CD4-positive, alpha-beta memory T cell (primary cell): ENCODE measurements at regions of chr10 and their contacts with region 1.

Region 1: DNA sequence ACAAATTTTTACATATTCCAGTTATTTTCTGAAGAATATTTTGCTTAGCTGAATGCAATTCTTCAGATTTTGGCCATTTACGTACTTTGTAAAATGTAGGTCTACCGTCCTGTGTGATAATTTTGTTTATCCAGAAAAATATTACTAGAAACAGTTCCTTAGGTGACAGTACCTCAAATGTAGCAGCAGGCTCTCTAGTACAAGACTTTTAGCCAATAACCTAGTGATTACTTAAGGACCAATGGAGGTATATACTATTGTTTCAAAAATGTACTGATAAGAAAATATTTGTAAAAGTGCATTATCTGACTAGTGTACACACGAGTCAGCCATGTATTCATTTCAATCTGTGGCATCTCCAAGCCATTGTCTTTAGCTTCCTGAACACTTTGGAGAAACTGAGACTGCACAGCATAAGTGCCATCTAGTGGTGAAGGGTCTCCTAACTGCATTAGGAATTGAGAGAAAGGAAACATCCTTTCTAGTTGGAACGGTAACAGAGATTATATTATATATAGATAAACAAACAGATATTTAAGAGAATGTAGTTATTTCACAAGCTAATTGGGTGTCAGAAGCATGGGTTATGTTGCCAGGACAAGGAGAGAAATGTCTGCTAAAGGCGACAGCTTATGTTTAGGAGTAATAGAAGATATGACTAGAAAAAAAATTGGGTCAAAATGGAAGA is 23.7 kb downstream of the RTKN2 start:
- DNase-seq: peak; percentile 52 to 68 (median 65)
- H3K4me3 ChIP-seq: no peak overlapping the region
- H3K4me3 Mint-ChIP-seq: peak overlapping the region in 6 of 8 donors; percentile 22 to 62 (median 42)
- H3K27ac ChIP-seq: no peak overlapping the region
- H3K27ac Mint-ChIP-seq: peak overlapping the region in 4 of 7 donors; percentile 11 to 70 (median 37)
- H3K4me1 ChIP-seq: peaks cover 37% of the 10 kb centered on the region
- H3K4me1 Mint-ChIP-seq: peaks cover 22 to 35% (median 25%) of the 10 kb centered on the region in 4 donors
- H3K27me3 ChIP-seq: no peaks in the 10 kb centered on the region
- H3K27me3 Mint-ChIP-seq: peaks cover 0 to 1% of the 10 kb centered on the region in 2 donors

Region 2: GRCh38 chr10:62076891-62077290 is 168.0 kb before region 1 on chr10:
- CTCF ChIA-PET with region 1: interaction called, 21 read pairs
- POLR2A ChIA-PET with region 1: interaction called, 5 read pairs
- intact Hi-C with region 1: loop called (anchors 1 kb)
- DNase-seq: peak in 1 of 5 donors; percentile 24
- H3K4me3 ChIP-seq: no peak overlapping the region
- H3K4me3 Mint-ChIP-seq: peak overlapping the region; percentile 3 to 71 (median 30)
- H3K27ac ChIP-seq: no peak overlapping the region
- H3K27ac Mint-ChIP-seq: peak overlapping the region; percentile 11 to 94 (median 77)
- H3K4me1 ChIP-seq: peaks cover 84% of the 10 kb centered on the region
- H3K4me1 Mint-ChIP-seq: peaks cover 56 to 93% (median 72%) of the 10 kb centered on the region in 4 donors
- H3K27me3 ChIP-seq: no peaks in the 10 kb centered on the region
- H3K27me3 Mint-ChIP-seq: no peaks in the 10 kb centered on the region

Region 3: GRCh38 chr10:62082729-62083411 is 162.1 kb before region 1 on chr10:
- CTCF ChIA-PET with region 1: interaction called, 21 read pairs
- POLR2A ChIA-PET with region 1: interaction called, 7 read pairs
- intact Hi-C with region 1: loop called (anchors 1 kb)
- DNase-seq: peak; percentile 58 to 74 (median 64)
- H3K4me3 ChIP-seq: peak overlapping the region in 1 of 2 donors; percentile 3
- H3K4me3 Mint-ChIP-seq: peak overlapping the region; percentile 58 to 83 (median 73)
- H3K27ac ChIP-seq: peak overlapping the region; percentile 45
- H3K27ac Mint-ChIP-seq: peak overlapping the region; percentile 24 to 95 (median 89)
- H3K4me1 ChIP-seq: peaks cover 79% of the 10 kb centered on the region
- H3K4me1 Mint-ChIP-seq: peaks cover 44 to 77% (median 62%) of the 10 kb centered on the region in 4 donors
- H3K27me3 ChIP-seq: no peaks in the 10 kb centered on the region
- H3K27me3 Mint-ChIP-seq: no peaks in the 10 kb centered on the region

Region 4: DNA sequence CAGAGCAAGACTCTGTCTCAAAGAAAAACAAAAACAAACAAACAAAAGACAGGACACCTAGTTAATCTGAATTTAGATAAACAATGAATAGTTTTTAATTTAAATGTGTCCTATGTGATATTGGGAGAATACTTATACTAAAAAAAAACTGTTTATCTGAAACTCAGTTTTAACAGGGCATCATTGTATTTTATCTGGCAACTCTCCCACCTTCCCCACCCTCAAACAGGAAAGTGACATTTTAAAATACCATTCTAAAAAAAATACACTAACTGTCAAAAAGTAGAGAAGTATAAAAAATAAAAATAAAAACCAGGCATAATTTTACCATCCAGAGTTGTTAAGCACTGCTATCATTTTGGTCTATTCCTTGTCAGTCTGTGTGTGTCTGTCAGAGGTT is 95.3 kb before region 1 on chr10:
- CTCF ChIA-PET with region 1: interaction called, 14 read pairs
- POLR2A ChIA-PET with region 1: interaction called, 5 read pairs
- intact Hi-C with region 1: loop called (anchors 1 kb)
- DNase-seq: no peak
- H3K4me3 ChIP-seq: no peak overlapping the region
- H3K4me3 Mint-ChIP-seq: no peak overlapping the region
- H3K27ac ChIP-seq: no peak overlapping the region
- H3K27ac Mint-ChIP-seq: no peak overlapping the region
- H3K4me1 ChIP-seq: no peaks in the 10 kb centered on the region
- H3K4me1 Mint-ChIP-seq: peaks cover 3 to 7% (median 6%) of the 10 kb centered on the region in 4 donors
- H3K27me3 ChIP-seq: no peaks in the 10 kb centered on the region
- H3K27me3 Mint-ChIP-seq: no peaks in the 10 kb centered on the region

Region 5: DNA sequence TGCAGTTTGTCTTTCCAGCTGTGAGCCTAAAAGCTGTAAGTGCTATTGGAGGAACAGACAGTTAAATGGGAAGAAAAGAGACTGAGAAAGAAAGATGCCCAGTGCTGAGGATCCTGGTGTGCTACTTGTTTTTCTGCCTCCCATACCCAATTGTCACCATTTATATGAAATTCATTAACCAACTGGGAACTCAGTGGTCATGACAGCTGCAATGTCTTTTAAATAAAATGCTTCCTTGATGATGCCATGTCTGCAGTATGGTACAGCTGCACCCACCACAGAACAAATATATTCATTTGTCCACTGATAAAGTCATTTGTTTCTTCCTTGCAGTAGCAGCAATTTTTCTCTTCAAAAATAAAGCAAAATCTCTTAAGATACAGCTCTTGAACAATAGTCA is 39.3 kb after region 1 on chr10:
- CTCF ChIA-PET with region 1: no interaction called
- POLR2A ChIA-PET with region 1: no interaction called
- intact Hi-C with region 1: no loop called
- DNase-seq: no peak
- H3K4me3 ChIP-seq: no peak overlapping the region
- H3K4me3 Mint-ChIP-seq: no peak overlapping the region
- H3K27ac ChIP-seq: no peak overlapping the region
- H3K27ac Mint-ChIP-seq: no peak overlapping the region
- H3K4me1 ChIP-seq: no peaks in the 10 kb centered on the region
- H3K4me1 Mint-ChIP-seq: no peaks in the 10 kb centered on the region
- H3K27me3 ChIP-seq: no peaks in the 10 kb centered on the region
- H3K27me3 Mint-ChIP-seq: peaks cover 2 to 8% of the 10 kb centered on the region in 2 donors